AG04450 (cell line): ENCODE measurements at regions of chr9 and their contacts with region 1.

Region 1: DNA sequence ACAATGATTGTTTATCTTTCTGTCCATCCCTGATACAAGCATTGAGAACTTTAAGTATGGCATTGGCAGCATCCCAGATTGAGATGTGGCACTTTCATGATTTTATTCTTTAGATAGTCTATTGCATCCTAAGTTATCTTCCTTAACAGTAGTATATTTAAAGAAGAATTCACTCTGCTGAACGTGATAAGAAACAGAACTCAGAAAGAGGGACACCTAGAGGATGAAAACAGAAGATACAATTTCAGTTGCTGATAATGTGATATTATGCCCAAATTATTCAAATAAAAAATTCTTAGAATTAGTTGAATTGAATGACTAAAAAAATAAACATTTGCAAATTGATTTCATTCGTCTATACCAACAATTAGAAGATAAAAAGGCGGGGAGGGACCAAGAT is 218.1 kb upstream of the DMRTA1 start:
- DNase-seq: no peak
- H3K4me3 ChIP-seq: no peak overlapping the region
- H3K27ac ChIP-seq: no peak overlapping the region
- H3K27me3 ChIP-seq: no peaks in the 10 kb centered on the region
- CTCF ChIP-seq: peak; percentile 48

Region 2: DNA sequence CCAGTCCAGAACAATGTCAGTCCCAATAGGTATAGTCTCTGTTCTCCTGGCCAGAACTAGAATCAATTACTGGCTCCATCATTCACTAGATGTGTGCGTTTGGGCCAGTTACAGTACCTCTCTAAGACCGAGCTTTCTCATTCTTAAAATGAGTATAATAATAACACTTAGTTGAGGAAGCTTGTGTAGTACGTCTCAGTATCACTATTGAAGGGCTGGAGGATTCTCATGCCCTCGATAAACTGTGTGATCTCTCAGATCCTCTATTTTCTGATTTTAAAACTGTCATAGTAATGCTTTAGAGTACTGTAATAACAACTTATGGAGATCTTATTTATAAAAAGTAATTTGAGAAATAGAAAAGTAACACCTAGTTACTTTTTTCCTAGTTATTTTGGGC is 285.1 kb before region 1 on chr9:
- CTCF ChIA-PET with region 1: interaction called, 12 read pairs
- POLR2A ChIA-PET with region 1: no interaction called
- DNase-seq: no peak
- H3K4me3 ChIP-seq: no peak overlapping the region
- H3K27ac ChIP-seq: no peak overlapping the region
- H3K27me3 ChIP-seq: peaks cover 2% of the 10 kb centered on the region
- CTCF ChIP-seq: no peak

Region 3: GRCh38 chr9:22037954-22038690 is 190.4 kb before region 1 on chr9:
- CTCF ChIA-PET with region 1: no interaction called
- POLR2A ChIA-PET with region 1: no interaction called
- DNase-seq: no peak
- H3K4me3 ChIP-seq: no peak overlapping the region
- H3K27ac ChIP-seq: no peak overlapping the region
- H3K27me3 ChIP-seq: no peaks in the 10 kb centered on the region
- CTCF ChIP-seq: peak; percentile 61

Region 4: GRCh38 chr9:22158927-22159346 is 69.6 kb before region 1 on chr9:
- CTCF ChIA-PET with region 1: no interaction called
- POLR2A ChIA-PET with region 1: no interaction called
- DNase-seq: no peak
- H3K4me3 ChIP-seq: no peak overlapping the region
- H3K27ac ChIP-seq: peak overlapping the region; percentile 52
- H3K27me3 ChIP-seq: no peaks in the 10 kb centered on the region
- CTCF ChIP-seq: no peak

Region 5: DNA sequence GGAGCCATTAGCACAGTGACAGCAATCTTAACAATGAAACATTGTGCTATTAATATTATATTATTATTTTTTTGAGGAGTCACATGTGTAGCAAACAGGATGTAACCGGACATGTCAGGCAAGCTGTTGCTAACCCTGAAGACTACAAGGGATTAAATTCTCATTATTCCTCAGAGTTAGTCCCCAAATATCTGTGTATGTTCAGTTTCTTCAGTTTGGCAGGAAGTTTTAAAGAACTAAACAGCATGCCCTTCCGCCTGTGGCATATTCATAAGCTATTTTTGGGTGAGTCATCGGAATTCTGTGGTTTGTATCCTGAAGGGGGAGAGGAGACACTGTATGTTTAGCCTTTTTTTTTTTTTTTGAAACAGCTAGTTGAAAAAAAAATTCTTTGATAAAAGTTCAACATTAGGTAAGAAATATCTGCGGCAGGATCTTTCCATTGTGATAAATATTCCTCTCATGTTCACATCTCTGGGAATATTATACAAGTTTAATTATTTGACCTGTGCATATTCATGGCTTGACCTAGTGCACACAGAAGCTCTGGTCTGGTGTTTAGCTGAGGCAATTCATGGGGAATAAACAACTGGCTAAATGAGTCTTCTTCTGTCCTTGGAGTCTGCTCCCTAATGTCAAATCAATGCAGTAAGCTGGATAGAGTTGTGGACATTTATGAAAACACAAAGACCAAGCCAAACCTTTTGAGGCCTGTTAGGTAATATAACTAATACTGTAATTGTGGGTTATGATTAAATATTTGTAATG is 16.8 kb before region 1 on chr9:
- CTCF ChIA-PET with region 1: interaction called, 10 read pairs
- POLR2A ChIA-PET with region 1: no interaction called
- DNase-seq: peak; percentile 69
- H3K4me3 ChIP-seq: no peak overlapping the region
- H3K27ac ChIP-seq: no peak overlapping the region
- H3K27me3 ChIP-seq: no peaks in the 10 kb centered on the region
- CTCF ChIP-seq: no peak

Region 6: DNA sequence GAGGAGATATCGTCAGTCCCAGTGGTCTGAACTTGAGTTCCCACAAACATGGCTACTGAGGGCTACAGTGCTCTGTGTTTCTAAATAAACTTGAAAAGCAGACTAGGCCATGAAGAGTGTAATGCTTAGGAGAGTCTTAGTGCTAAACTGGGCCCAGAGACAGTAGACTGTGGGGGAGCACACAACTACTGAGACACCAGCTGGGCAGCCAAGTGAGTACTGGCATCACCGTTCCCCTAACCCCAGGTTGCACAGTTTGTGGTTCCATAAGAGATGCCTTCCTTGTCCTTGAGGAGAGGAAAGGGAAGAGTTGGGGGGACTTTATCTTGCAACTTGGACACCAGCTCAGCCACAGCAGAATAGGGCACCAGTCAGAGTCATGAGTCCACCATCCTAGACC is 45.9 kb after region 1 on chr9:
- CTCF ChIA-PET with region 1: no interaction called
- POLR2A ChIA-PET with region 1: no interaction called
- DNase-seq: no peak
- H3K4me3 ChIP-seq: no peak overlapping the region
- H3K27ac ChIP-seq: no peak overlapping the region
- H3K27me3 ChIP-seq: no peaks in the 10 kb centered on the region
- CTCF ChIP-seq: no peak

Region 7: DNA sequence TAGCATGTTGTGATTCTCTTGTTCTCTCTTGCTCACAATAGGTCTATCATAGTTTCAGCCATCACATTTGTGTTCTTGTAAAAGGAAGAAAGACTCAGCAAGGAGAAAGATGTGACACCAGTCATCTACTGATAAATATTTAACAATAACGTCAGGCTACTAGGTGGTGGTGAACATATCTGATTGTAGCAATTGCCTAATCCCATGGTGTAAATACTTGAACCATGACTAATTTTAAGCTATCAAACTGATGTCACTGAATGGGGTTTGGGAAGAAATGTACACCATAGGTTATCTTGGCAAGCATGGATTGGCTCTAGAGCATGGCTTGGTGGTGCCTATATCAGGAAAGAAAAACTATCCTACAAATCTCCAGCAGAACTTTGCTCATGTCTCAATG is 234.7 kb after region 1 on chr9:
- CTCF ChIA-PET with region 1: no interaction called
- POLR2A ChIA-PET with region 1: no interaction called
- DNase-seq: no peak
- H3K4me3 ChIP-seq: no peak overlapping the region
- H3K27ac ChIP-seq: no peak overlapping the region
- H3K27me3 ChIP-seq: no peaks in the 10 kb centered on the region
- CTCF ChIP-seq: no peak